Calu3 (cell line): ENCODE measurements at regions of chr7 and their contacts with region 1.

Region 1: GRCh38 chr7:7696458-7697119 is 21.8 kb downstream of the RPA3 start:
- DNase-seq: peak; percentile 27
- H3K4me3 Mint-ChIP-seq: peak overlapping the region; percentile 36
- H3K27ac Mint-ChIP-seq: peak overlapping the region; percentile 76
- H3K4me1 Mint-ChIP-seq: peaks cover 48% of the 10 kb centered on the region
- H3K27me3 Mint-ChIP-seq: no peaks in the 10 kb centered on the region
- CTCF ChIP-seq: no peak

Region 2: GRCh38 chr7:7653593-7654187 is 42.9 kb before region 1 on chr7:
- CTCF ChIA-PET with region 1: no interaction called
- intact Hi-C with region 1: no loop called
- DNase-seq: peak; percentile 58
- H3K4me3 Mint-ChIP-seq: no peak overlapping the region
- H3K27ac Mint-ChIP-seq: no peak overlapping the region
- H3K4me1 Mint-ChIP-seq: peaks cover 7% of the 10 kb centered on the region
- H3K27me3 Mint-ChIP-seq: no peaks in the 10 kb centered on the region
- CTCF ChIP-seq: peak; percentile 91

Region 3: DNA sequence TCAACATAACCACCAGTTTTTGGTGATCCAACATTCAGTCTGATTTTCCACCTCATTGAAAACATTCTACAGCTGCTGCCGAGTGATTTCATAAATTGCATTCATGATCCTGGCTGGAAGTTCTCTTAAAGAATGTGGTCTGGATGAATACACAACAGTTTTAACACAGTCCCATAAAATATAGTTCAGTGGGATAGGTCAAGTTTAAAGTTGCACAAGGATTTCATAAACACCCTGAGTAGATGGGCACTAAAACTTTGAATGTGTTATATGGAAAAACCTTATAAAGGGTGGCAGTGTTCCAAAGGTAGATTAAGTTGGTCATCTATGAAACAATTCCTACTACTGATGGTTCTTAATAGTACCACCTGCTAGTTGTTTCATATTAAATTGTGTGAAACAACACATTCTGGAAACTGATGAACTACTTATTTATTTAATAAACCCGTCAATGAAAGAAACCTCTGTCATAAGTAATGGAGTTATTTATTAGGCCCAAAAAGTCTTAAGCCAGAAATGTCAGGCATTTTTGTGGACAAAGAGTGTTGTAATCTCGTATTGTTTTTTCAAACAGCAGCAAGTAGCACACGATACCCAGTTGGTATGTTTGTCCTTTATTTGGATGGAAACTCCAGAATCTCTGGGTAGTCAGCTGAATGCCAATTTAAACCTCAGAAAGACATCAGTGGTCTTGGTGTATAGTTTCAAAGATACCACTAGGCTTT is 36.1 kb after region 1 on chr7:
- CTCF ChIA-PET with region 1: no interaction called
- intact Hi-C with region 1: loop called (anchors 5 kb)
- DNase-seq: no peak
- H3K4me3 Mint-ChIP-seq: no peak overlapping the region
- H3K27ac Mint-ChIP-seq: no peak overlapping the region
- H3K4me1 Mint-ChIP-seq: peaks cover 26% of the 10 kb centered on the region
- H3K27me3 Mint-ChIP-seq: no peaks in the 10 kb centered on the region
- CTCF ChIP-seq: no peak

Region 4: DNA sequence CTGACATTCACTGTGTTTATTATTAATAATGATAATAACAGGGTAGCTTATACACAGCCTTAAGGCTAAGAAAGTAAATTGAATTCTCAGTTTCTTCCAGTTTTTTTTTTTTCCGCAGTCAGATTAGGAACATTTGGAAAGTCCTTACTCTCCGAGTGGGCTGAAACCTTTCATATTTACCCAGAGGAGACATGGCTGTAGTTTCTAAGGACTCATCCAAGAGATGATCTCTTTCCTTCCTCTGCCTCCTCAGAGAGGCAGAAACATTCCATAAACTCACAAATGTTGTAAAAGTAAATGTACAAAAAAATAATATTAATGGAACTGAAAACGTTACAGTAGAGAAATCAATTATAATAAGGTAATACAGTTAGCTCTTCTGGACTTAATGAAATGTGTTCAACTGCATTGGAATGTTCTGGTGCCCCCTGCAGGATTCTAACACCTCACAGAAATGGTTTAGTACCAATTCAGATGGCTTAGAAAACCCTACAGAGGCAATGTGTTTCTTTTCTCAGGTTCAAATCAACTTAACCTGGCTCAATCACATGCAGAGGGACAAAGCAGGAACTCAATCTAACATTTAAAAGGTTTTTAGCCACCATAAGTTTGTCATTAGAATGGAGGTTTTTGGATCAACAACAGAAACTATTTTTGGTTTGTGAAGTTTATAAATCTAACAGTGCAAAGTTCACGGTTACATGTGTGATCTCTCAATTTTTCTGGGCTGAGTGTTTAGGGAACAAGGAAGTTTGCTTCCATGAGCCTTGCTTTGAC is 493.7 kb after region 1 on chr7:
- CTCF ChIA-PET with region 1: no interaction called
- intact Hi-C with region 1: loop called (anchors 10 kb)
- DNase-seq: peak; percentile 62
- H3K4me3 Mint-ChIP-seq: no peak overlapping the region
- H3K27ac Mint-ChIP-seq: no peak overlapping the region
- H3K4me1 Mint-ChIP-seq: no peaks in the 10 kb centered on the region
- H3K27me3 Mint-ChIP-seq: no peaks in the 10 kb centered on the region
- CTCF ChIP-seq: peak; percentile 57